MCF 10A (cell line): ENCODE measurements at regions of chr19 and their contacts with region 1.

Region 1: GRCh38 chr19:49676690-49677231 is 310 bp upstream of the PRMT1 start:
- DNase-seq: peak; percentile 100
- H3K4me3 Mint-ChIP-seq: peak overlapping the region; percentile 96
- H3K27ac Mint-ChIP-seq: peak overlapping the region; percentile 99
- H3K4me1 Mint-ChIP-seq: peaks cover 20% of the 10 kb centered on the region
- H3K27me3 Mint-ChIP-seq: no peaks in the 10 kb centered on the region
- CTCF ChIP-seq: no peak

Region 2: DNA sequence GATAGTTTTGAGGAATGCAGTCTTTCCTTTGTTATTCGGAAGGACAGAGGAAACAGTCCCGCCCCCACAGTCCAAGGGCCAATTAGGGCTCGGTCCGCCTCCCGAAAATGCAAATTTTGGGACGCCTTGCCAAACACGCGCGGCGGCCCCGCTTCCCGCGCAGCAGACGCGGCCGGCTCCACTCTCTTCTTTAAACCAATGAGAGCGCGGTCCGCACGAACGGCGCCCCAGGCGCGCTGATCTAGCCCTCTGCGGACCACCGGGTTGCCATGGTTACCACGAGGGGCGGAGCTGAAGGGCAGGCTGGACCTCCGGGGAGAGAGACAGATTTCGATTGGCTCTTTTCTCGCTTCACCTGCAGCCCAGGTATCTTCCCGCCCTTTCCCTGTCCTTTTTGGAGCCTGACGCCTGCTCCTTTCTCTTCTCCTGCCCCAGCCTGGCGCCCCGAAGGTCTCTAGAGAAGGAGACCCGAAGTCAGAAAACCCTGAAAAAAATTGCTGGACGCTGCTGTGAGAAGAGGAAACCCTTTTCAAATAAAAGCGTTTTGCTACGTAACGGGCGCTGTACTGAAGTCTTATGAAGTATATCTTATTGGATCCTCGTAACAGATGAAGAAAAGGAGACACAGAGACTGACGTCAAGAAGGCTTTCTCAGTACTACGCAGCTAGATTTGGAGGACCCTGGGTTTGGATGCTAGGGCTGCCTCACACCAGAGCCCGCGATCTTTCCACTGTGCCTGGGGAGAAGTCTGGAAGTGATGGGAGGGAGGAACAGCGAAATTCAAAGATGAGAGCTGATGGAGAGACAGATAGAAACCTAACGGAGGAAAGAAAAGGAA is 255.5 kb before region 1 on chr19:
- CTCF ChIA-PET with region 1: no interaction called
- POLR2A ChIA-PET with region 1: no interaction called
- intact Hi-C with region 1: no loop called
- DNase-seq: peak; percentile 77
- H3K4me3 Mint-ChIP-seq: peak overlapping the region; percentile 42
- H3K27ac Mint-ChIP-seq: no peak overlapping the region
- H3K4me1 Mint-ChIP-seq: peaks cover 22% of the 10 kb centered on the region
- H3K27me3 Mint-ChIP-seq: peaks cover 94% of the 10 kb centered on the region
- CTCF ChIP-seq: no peak

Region 3: DNA sequence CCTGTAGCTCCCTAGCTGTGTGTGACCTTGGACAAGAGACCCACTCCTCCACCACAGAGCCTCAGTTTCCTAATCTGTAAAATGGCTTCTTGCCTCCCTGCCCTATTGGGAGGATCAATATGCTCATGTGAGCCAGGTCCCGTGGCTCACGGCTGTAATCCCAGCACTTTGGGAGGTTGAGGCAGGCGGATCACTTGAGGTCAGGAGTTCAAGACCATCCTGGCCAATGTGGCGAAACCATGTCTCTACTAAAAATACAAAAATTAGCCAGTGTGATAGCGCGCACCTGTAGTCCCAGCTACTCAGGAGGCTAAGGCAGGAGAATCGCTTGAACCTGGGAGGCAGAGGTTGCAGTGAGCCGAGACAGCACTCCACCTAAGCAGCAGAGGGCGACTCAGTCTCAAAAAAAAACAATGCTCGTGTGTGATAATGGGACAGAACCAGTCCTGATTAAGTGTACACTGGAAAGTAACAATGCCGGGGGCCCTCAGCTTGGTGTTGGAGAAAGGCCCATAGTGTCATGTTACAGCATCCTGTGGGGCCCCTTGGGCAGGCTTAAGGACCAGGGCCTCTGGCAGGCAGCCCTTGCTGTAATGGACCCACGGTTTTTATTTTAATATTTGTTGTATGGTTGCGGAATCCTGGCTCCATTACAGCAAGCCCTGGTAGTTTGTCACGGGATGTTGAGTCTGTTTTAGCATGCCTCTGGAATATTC is 173.7 kb before region 1 on chr19:
- CTCF ChIA-PET with region 1: interaction called, 4 read pairs
- POLR2A ChIA-PET with region 1: no interaction called
- intact Hi-C with region 1: loop called (anchors 1 kb)
- DNase-seq: peak; percentile 73
- H3K4me3 Mint-ChIP-seq: no peak overlapping the region
- H3K27ac Mint-ChIP-seq: no peak overlapping the region
- H3K4me1 Mint-ChIP-seq: peaks cover 6% of the 10 kb centered on the region
- H3K27me3 Mint-ChIP-seq: no peaks in the 10 kb centered on the region
- CTCF ChIP-seq: peak; percentile 44

Region 4: GRCh38 chr19:49665351-49666119 is 11.2 kb before region 1 on chr19 and contains the starts of genes BCL2L12 and IRF3:
- CTCF ChIA-PET with region 1: interaction called, 5 read pairs
- POLR2A ChIA-PET with region 1: interaction called, 56 read pairs
- intact Hi-C with region 1: no loop called
- DNase-seq: peak; percentile 98
- H3K4me3 Mint-ChIP-seq: peak within 1 kb of the TSS; percentile 91
- H3K27ac Mint-ChIP-seq: peak within 1 kb of the TSS; percentile 91
- H3K4me1 Mint-ChIP-seq: peaks cover 17% of the 10 kb centered on the region
- H3K27me3 Mint-ChIP-seq: no peaks in the 10 kb centered on the region
- CTCF ChIP-seq: no peak
- total RNA-seq, gene BCL2L12: 29.4 and 36.0 TPM in 2 replicates
- total RNA-seq, gene IRF3: 65.6 and 82.2 TPM in 2 replicates

Region 5: GRCh38 chr19:49817964-49818648 is 141.3 kb after region 1 on chr19 and contains the start of gene MED25:
- CTCF ChIA-PET with region 1: no interaction called
- POLR2A ChIA-PET with region 1: interaction called, 16 read pairs
- intact Hi-C with region 1: no loop called
- DNase-seq: peak; percentile 84
- H3K4me3 Mint-ChIP-seq: peak within 1 kb of the TSS; percentile 97
- H3K27ac Mint-ChIP-seq: peak within 1 kb of the TSS; percentile 100
- H3K4me1 Mint-ChIP-seq: peaks cover 16% of the 10 kb centered on the region
- H3K27me3 Mint-ChIP-seq: no peaks in the 10 kb centered on the region
- CTCF ChIP-seq: peak; percentile 26
- total RNA-seq, gene MED25: 39.9 and 43.2 TPM in 2 replicates

Region 6: DNA sequence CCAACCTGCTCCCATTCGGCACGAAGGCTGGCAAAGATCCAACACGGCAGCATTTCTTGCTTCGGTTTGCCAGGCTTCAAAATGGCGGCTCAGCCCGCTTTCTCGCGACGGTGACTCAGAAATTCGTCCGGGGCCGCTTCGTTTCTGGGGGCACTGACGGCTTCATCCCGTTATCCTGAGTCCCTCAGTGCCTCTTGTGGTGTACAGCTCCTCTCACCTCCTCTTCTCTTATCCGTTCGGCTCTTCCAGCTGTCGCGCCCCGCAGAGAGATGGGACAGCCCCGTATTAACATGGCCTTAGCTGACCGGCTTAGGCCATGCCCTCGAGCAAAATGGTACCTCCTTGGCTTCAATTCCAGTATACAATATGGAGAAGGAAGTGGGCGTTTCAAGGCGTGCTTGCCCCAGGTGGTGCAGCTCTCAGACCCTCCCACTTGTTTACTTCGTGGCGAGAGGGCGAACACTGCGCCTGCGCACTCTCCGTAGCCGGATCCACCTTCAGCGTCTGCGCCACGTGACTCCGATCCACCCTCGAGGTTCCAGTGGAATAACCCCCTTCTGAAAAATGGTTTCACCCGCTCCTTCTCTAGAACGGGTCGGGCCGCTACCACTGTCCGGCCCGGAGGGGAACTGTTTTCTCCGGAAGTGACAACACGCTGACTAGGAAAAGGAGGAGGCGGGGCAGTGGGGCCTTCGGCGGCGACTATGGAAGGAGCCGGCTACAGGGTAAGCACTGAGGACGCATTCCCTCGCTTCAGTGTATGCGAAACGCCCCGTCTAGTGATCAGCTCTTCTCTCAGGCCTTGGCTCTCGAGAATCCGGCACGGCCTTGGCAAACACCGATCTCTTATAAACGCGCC is 200.5 kb after region 1 on chr19 and contains the starts of genes AKT1S1 and TBC1D17:
- CTCF ChIA-PET with region 1: no interaction called
- POLR2A ChIA-PET with region 1: interaction called, 22 read pairs
- intact Hi-C with region 1: no loop called
- DNase-seq: peak; percentile 100
- H3K4me3 Mint-ChIP-seq: no peak within 1 kb of the TSS
- H3K27ac Mint-ChIP-seq: no peak within 1 kb of the TSS
- H3K4me1 Mint-ChIP-seq: peaks cover 10% of the 10 kb centered on the region
- H3K27me3 Mint-ChIP-seq: no peaks in the 10 kb centered on the region
- CTCF ChIP-seq: no peak
- total RNA-seq, gene AKT1S1: 74.7 and 79.2 TPM in 2 replicates
- total RNA-seq, gene TBC1D17: 25.2 and 25.5 TPM in 2 replicates